SK-N-SH (cell line): ENCODE measurements at regions of chr13 and their contacts with region 1.

Region 1: DNA sequence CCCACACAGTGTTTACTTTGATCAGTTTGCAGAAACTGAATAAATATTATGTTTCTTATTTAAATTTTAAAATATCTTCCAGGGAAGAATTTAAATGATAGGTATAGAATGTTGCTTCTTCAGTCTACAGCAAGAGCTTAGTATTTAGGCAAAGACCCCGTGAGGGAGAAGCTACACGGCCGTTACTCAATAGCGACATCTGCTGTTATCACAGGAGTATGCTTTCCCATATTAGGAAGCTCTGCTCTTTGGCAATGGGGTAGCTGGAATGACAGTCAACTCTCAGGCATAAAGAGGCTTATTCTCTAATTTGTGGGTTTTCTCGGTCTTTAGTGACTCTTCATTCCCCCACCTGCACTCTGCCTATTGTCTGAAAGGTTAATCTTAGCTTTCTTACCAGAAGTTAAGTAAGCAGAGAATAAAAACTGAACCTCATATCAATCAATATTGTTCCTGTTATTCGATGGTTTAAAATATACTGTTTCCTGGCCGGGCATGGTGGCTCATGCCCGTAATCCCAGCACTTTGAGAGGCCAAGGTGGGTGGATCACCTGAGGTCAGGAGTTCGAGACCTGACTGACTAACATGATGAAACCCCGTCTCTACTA is 13.2 kb upstream of the LHFPL6 start:
- DNase-seq: peak; percentile 64
- H3K4me3 ChIP-seq: no peak overlapping the region; a peak in 1 of 4 replicates
- H3K27ac ChIP-seq: no peak overlapping the region
- H3K4me1 ChIP-seq: peaks cover 0 to 6% of the 10 kb centered on the region in 2 experiments; a peak in 1 of 4 replicates
- H3K27me3 ChIP-seq: no peaks in the 10 kb centered on the region
- CTCF ChIP-seq: peak; percentile 90
- EP300 ChIP-seq: no peak
- RAD21 ChIP-seq: peak; percentile 87

Region 2: DNA sequence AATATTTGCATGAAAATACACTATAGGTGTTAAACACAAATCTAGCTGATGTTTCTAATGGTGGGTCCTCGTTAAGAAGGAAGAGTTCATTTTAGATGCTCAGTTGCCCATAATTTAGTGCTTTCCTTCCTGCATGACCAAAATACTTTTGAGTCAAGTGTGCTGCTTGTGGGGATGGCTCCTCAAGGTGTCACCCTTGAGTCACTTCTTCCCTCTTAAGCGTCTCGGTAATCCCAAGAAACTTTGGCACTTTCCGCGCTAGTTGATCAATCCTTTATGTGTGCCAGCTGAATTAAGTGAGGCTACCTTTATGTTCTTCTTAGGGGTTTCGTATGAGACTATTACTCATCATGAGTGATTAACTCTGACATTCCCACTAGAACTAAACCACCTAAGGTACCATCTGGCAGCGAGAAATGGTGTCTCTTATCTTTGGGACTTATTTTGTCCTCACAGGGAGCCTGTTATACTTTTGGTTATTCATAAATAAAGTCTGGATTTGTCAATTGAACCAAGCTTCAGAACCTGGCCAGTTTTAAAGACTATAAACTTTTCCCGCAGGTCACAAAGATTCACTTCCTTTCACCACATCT is 471.2 kb before region 1 on chr13:
- CTCF ChIA-PET with region 1: interaction called, 26 read pairs
- POLR2A ChIA-PET with region 1: no interaction called
- DNase-seq: peak; percentile 56
- H3K4me3 ChIP-seq: no peak overlapping the region; a peak in 1 of 4 replicates
- H3K27ac ChIP-seq: no peak overlapping the region
- H3K4me1 ChIP-seq: no peaks in the 10 kb centered on the region
- H3K27me3 ChIP-seq: no peaks in the 10 kb centered on the region; the same call in 1 of the 2 replicates
- CTCF ChIP-seq: peak; percentile 76
- EP300 ChIP-seq: no peak
- RAD21 ChIP-seq: peak; percentile 79

Region 3: DNA sequence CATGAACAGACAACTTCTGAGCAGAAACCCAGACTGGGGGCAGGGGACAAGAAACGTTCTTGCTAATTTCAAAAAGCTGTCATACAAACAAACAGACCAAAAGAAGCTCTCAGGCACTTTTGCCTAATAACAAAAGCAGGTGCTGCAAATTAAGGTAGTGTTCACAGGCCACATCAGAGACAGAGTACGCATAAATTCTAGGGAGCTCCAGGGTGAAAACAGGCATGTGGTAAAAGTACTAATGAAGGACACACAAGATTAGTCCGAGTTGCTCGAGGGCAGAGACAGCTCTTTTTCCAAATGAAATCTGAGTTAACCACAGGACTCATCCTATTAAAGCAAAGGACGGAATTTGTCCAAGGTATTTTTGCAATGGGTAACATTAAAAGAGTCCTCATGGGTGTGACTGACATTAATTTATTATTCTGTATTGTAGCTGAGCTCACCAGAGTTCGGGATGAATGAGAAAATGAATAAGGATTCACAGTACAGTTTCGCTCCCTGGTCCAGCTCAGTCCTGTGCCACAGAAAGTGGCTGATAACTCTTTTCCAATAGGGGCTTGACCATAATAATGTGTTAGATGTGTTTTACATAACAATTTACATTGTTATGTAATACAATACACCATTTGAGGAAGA is 210.5 kb before region 1 on chr13:
- CTCF ChIA-PET with region 1: interaction called, 13 read pairs
- POLR2A ChIA-PET with region 1: no interaction called
- DNase-seq: no peak
- H3K4me3 ChIP-seq: no peak overlapping the region
- H3K27ac ChIP-seq: no peak overlapping the region
- H3K4me1 ChIP-seq: peaks cover 0 to 4% of the 10 kb centered on the region in 2 experiments; a peak in 3 of 4 replicates
- H3K27me3 ChIP-seq: no peaks in the 10 kb centered on the region
- CTCF ChIP-seq: no peak
- EP300 ChIP-seq: no peak
- RAD21 ChIP-seq: no peak

Region 4: GRCh38 chr13:39496440-39497010 is 119.7 kb before region 1 on chr13:
- CTCF ChIA-PET with region 1: interaction called, 10 read pairs
- POLR2A ChIA-PET with region 1: no interaction called
- DNase-seq: no peak
- H3K4me3 ChIP-seq: no peak overlapping the region
- H3K27ac ChIP-seq: no peak overlapping the region
- H3K4me1 ChIP-seq: peaks cover 2 to 13% of the 10 kb centered on the region in 2 experiments; a peak in 2 of 4 replicates
- H3K27me3 ChIP-seq: no peaks in the 10 kb centered on the region
- CTCF ChIP-seq: no peak
- EP300 ChIP-seq: no peak
- RAD21 ChIP-seq: no peak

Region 5: GRCh38 chr13:39635564-39635963 is 19.4 kb after region 1 on chr13:
- CTCF ChIA-PET with region 1: interaction called, 11 read pairs
- POLR2A ChIA-PET with region 1: no interaction called
- DNase-seq: no peak
- H3K4me3 ChIP-seq: no peak overlapping the region
- H3K27ac ChIP-seq: no peak overlapping the region
- H3K4me1 ChIP-seq: no peaks in the 10 kb centered on the region
- H3K27me3 ChIP-seq: no peaks in the 10 kb centered on the region; the same call in 1 of the 2 replicates
- CTCF ChIP-seq: no peak
- EP300 ChIP-seq: no peak
- RAD21 ChIP-seq: no peak